Right ventricle myocardium superior (tissue), 1 donor: ENCODE measurements at regions of chr3 and their contacts with region 1.

Region 1: GRCh38 chr3:52052831-52053306 is 3.5 kb downstream of the DUSP7 start:
- DNase-seq: peak; percentile 95
- ATAC-seq: peak; percentile 41

Region 2: DNA sequence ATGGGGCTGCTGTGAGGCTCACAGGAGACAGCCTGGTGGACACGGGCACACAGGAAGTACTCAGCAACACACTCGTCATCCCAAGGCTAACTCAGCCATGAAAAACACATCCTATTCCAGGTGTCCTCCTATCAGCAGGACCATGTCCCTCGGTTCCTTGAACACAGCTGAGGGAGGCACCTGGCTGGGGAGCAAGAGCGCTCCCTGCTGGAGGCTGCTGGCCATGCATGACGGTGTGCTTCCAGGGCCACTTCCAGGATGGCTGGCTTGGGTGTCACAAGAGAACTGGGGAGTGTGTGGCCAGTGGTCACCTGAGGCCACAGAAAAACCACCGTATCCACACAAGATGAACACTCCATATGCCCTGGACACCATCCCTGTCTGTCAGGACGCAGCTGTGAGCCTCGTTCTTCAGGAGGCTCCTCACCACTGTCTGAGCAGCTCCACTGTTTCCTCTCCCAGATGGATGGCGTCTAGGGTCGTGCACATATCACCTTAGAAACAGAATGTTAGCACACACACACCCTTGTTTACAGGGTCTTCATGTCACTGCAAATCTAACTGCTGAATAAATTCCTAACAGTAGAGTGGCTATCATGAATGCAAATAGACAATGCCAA is 70.3 kb after region 1 on chr3:
- intact Hi-C with region 1: loop called (anchors 2 kb)
- DNase-seq: peak; percentile 84
- ATAC-seq: peak; percentile 86